MCF 10A (cell line): ENCODE measurements at regions of chr2 and their contacts with region 1.

Region 1: DNA sequence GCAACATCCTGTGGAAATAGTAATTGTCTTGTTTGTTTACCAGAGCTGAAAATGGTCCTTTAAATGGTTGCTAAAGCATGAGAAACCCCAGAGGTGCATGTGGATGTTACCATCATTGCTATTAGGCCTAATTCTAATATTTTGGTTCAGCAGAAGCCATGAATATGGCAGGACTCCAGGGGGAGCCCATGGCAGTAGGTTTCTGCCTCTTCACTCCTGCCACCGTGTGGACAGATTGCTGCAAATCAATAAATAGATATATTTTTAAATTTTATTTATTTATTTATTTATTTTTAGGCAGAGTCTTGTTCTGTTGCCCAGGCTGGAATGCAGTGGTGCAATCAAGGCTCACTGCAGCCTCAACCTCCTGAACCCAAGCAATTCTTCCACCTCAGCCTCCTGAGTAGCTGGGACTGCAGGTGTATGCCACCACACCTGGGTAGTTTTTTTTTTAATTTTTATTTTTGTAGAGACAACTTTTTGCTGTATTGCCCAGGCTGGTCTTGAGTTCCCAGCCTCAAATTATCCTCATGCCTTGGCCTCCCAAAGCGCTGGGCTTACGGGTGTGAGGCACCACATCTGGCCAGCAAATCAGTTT is 54.9 kb upstream of the CAPN13 start:
- DNase-seq: peak; percentile 83
- H3K4me3 Mint-ChIP-seq: no peak overlapping the region
- H3K27ac Mint-ChIP-seq: no peak overlapping the region
- H3K4me1 Mint-ChIP-seq: no peaks in the 10 kb centered on the region
- H3K27me3 Mint-ChIP-seq: no peaks in the 10 kb centered on the region
- CTCF ChIP-seq: peak; percentile 79

Region 2: GRCh38 chr2:30877833-30878232 is 15.7 kb after region 1 on chr2:
- CTCF ChIA-PET with region 1: interaction called, 10 read pairs
- POLR2A ChIA-PET with region 1: no interaction called
- intact Hi-C with region 1: no loop called
- DNase-seq: no peak
- H3K4me3 Mint-ChIP-seq: no peak overlapping the region
- H3K27ac Mint-ChIP-seq: no peak overlapping the region
- H3K4me1 Mint-ChIP-seq: no peaks in the 10 kb centered on the region
- H3K27me3 Mint-ChIP-seq: peaks cover 15% of the 10 kb centered on the region
- CTCF ChIP-seq: no peak

Region 3: DNA sequence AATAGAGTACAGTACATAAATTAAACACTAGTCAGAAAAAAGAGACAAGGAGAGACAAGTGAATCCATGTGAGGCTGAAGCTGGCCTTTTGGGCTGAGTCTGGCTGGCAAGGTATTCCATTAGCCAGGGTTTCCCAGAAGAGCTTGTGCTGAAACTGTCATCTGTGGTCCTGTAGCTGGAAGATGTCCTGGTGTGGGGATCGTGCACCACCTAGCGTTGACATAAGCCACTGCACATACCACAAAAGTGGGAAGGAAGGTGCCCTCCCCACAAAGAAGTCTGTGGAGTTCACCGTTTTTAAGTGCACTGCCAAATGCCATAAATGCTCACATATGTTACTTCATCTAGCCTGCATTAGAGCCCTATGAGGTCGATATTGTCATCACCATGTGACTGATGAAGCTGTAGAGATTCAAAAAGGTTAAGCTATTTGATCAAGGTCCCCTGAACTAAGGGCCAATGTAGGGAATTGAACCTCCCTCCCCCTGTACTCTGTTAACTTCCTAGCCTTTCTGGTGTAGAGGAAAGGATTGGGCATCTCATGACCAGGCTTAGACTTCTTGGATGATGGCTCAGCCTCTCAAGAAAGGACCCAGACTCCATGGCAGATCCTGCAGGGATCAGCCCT is 308.0 kb after region 1 on chr2:
- CTCF ChIA-PET with region 1: interaction called, 19 read pairs
- POLR2A ChIA-PET with region 1: no interaction called
- intact Hi-C with region 1: loop called (anchors 1 kb)
- DNase-seq: peak; percentile 71
- H3K4me3 Mint-ChIP-seq: no peak overlapping the region
- H3K27ac Mint-ChIP-seq: no peak overlapping the region
- H3K4me1 Mint-ChIP-seq: no peaks in the 10 kb centered on the region
- H3K27me3 Mint-ChIP-seq: peaks cover 18% of the 10 kb centered on the region
- CTCF ChIP-seq: peak; percentile 96